ENCODE measurements at regions of chr19 and their contacts with region 1.

Region 1: DNA sequence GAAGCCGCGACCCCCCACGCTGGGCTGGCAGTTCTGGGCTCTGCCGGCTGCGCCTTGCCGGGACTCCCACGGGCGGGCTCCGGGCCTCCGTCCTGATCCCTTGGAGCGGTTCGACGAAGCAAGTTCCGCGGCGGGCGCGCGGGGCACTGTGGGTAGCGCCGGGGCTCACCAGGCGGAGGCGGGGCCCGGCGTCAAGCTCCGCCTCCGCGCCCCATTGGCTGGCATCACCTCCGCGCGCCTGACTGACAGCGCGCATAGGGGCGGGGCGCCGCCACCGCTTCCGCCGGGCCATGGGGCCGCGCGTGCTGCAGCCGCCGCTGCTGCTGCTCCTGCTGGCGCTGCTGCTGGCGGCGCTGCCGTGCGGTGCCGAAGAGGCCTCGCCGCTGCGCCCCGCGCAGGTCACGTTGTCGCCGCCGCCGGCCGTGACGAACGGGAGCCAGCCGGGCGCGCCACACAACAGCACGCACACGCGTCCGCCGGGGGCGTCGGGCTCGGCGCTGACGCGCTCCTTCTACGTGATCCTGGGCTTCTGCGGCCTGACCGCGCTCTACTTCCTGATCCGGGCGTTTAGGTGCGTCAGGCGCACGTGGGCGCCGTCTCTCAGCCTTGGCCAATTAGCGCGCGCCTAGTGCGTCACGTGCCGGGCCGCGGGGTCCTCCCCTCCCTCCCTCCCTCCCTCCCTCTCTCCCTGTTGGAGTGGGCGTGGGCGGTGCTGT is at the start of gene FAM174C:
- DNase-seq: peak; percentile 92
- ATAC-seq: peak; percentile 69
- H3K4me3 ChIP-seq: peak within 1 kb of the TSS; percentile 70
- H3K27ac ChIP-seq: peak within 1 kb of the TSS; percentile 95
- H3K4me1 ChIP-seq: peaks cover 52% of the 10 kb centered on the region
- H3K27me3 ChIP-seq: no peaks in the 10 kb centered on the region
- CTCF ChIP-seq: no peak
- total RNA-seq, gene FAM174C: 110 and 133 TPM in 2 replicates

Region 2: GRCh38 chr19:1355568-1356507 is 80.4 kb after region 1 on chr19:
- CTCF ChIA-PET with region 1: no interaction called
- POLR2A ChIA-PET with region 1: no interaction called
- intact Hi-C with region 1: loop called (anchors 10 kb)
- DNase-seq: peak; percentile 8
- ATAC-seq: peak; percentile 5; the same call in 1 of the 2 replicates
- H3K4me3 ChIP-seq: peak overlapping the region; percentile 66
- H3K27ac ChIP-seq: no peak overlapping the region
- H3K4me1 ChIP-seq: peaks cover 6% of the 10 kb centered on the region
- H3K27me3 ChIP-seq: no peaks in the 10 kb centered on the region
- CTCF ChIP-seq: no peak

Region 3: GRCh38 chr19:1373534-1374249 is 98.3 kb after region 1 on chr19:
- CTCF ChIA-PET with region 1: no interaction called
- POLR2A ChIA-PET with region 1: no interaction called
- intact Hi-C with region 1: loop called (anchors 1 kb)
- DNase-seq: no peak
- ATAC-seq: no peak
- H3K4me3 ChIP-seq: no peak overlapping the region
- H3K27ac ChIP-seq: no peak overlapping the region
- H3K4me1 ChIP-seq: no peaks in the 10 kb centered on the region
- H3K27me3 ChIP-seq: no peaks in the 10 kb centered on the region
- CTCF ChIP-seq: no peak

Measured in PC-3 (cell line).